ENCODE measurements at regions of chr11 and their contacts with region 1.

Region 1: DNA sequence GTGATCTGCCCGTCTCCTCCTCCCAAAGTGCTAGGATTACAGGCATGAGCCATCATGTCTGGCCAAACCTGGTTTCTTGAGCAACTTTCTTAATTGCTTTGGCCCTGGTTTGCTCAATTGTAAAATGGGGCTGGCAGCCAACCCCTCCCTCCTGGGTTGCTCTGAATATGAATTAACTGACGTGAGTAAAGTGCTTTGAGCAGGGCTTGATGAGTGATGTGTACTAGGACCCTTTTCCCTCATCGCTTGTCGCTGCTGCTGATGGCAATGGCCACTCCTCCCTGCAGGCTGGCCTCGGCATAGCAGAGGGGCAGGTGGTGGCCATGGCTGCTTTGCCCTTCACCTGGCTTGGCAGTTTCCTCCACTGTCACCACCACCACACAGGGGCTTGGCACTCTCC is 41.5 kb downstream of the RNF141 start:
- DNase-seq: no peak
- H3K4me3 ChIP-seq: no peak overlapping the region
- H3K27ac ChIP-seq: no peak overlapping the region
- H3K4me1 ChIP-seq: no peaks in the 10 kb centered on the region
- H3K27me3 ChIP-seq: no peaks in the 10 kb centered on the region

Region 2: DNA sequence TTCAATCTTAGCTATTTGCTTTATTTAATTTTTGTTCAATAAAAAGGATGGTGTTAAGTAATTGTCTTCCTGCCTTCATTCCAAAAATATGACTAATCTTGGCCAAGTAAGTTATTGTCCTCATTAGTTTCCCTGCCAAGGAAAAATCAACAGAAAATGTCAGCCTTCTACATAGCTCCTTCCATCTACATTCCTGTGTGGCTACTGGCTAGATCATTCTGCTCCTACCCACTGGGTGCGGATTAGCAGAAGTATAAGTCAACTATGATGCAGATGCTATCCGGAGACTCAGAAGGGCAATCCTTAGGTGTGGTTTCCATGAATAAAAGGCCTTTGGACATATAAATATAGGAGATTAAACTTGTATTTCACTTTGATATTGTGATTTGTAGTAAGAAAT is 359.8 kb before region 1 on chr11:
- in situ Hi-C with region 1: no loop called
- DNase-seq: peak; percentile 87
- H3K4me3 ChIP-seq: peak overlapping the region; percentile 37
- H3K27ac ChIP-seq: peak overlapping the region; percentile 84
- H3K4me1 ChIP-seq: peaks cover 30% of the 10 kb centered on the region
- H3K27me3 ChIP-seq: no peaks in the 10 kb centered on the region

Region 3: DNA sequence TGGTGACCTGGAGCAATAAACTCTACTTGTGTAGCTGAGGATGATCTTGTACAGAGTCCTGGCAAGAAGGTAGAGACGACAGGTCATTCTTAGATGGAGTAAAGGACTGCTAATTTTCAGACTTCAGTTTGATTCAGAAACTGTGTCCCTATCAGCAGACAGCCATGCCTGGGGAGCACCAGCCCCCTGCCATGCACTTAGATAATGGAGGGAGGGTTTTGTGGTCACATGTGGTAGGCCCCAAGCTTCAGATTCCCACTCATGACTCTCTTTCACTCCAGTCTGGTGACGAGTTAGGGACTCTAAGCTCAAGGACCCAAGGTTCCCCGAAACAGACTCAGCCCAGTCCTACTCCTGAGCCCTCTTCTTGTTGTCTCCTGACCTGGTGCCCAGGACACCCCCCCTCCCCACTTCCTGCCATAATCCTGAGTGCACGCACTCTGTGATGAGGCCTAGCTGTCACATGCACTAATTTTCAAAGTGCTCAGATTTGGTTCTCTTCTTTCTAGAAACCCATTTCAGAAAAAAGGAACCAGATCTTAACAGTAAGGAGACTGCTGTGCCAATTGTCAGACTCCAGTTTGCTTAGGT is 54.6 kb before region 1 on chr11:
- in situ Hi-C with region 1: loop called (anchors 5 kb)
- DNase-seq: no peak
- H3K4me3 ChIP-seq: no peak overlapping the region
- H3K27ac ChIP-seq: no peak overlapping the region
- H3K4me1 ChIP-seq: no peaks in the 10 kb centered on the region
- H3K27me3 ChIP-seq: no peaks in the 10 kb centered on the region

Measured in GM23248 (cell line).